H1 (cell line): ENCODE measurements at regions of chr1 and their contacts with region 1.

Region 1: GRCh38 chr1:181142096-181142958 is 53.8 kb downstream of the IER5 start:
- DNase-seq: peak; percentile 76 to 97
- H3K4me3 ChIP-seq: peak overlapping the region in 2 of 4 experiments; percentile 6 to 45; a peak in 2 of 8 replicates
- H3K27ac ChIP-seq: no peak overlapping the region
- H3K4me1 ChIP-seq: peaks cover 0 to 3% (median 2%) of the 10 kb centered on the region in 4 experiments; a peak in 3 of 7 replicates
- H3K27me3 ChIP-seq: peaks cover 0 to 2% (median under 1%) of the 10 kb centered on the region in 4 experiments; a peak in 1 of 7 replicates
- CTCF ChIP-seq: peak; percentile 97 to 98 (median 98)
- EP300 ChIP-seq: 0 out of 3 replicates have a peak, but pooled peaks of 1 of the 2 experiments have one; percentile 29
- POLR2A ChIP-seq: no peak
- RAD21 ChIP-seq: peak; percentile 100

Region 2: GRCh38 chr1:180533266-180533987 is 608.9 kb before region 1 on chr1:
- CTCF ChIA-PET with region 1: no interaction called
- POLR2A ChIA-PET with region 1: no interaction called
- DNase-seq: peak; percentile 15 to 84
- H3K4me3 ChIP-seq: no peak overlapping the region
- H3K27ac ChIP-seq: no peak overlapping the region
- H3K4me1 ChIP-seq: peaks cover 0 to 2% (median 0%) of the 10 kb centered on the region in 4 experiments; a peak in 2 of 7 replicates
- H3K27me3 ChIP-seq: no peaks in the 10 kb centered on the region
- CTCF ChIP-seq: peak; percentile 78 to 92 (median 87)
- EP300 ChIP-seq: no peak
- POLR2A ChIP-seq: no peak
- RAD21 ChIP-seq: peak; percentile 95 to 98

Region 3: DNA sequence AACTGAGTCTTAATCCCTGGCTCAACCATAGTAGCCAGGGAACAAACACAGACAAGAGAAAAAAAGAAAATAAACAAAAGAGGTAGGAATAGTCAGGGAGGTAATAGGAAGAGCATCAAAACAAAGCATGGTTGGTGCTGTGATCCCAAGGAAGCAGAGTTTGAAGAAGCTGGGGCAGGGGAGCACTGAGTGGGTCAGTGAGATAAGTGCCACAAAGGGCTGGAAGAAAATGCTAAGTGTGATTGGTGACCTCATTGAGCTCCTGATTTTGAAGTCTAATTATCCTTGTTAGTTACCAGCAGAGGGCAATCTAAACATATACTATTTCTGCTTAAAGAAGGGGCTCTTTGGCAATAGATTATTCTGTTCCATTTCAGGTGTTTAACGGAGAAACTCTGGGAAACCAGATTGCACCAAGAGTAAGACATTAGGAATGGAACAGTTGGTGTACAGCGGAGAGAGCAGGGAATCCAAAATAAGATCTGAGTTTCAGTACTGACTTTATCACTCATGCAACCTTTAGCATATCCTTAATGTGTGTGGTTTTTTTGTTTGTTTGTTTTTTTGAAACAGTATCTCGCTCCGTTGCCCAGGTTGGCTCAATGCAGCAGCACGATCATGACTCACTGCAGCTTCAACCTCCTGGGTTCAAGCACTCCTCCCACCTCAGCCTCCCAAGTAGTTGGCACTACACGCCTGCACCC is 260.4 kb before region 1 on chr1:
- CTCF ChIA-PET with region 1: interaction called, 14 read pairs
- POLR2A ChIA-PET with region 1: no interaction called
- DNase-seq: no peak
- H3K4me3 ChIP-seq: no peak overlapping the region
- H3K27ac ChIP-seq: no peak overlapping the region
- H3K4me1 ChIP-seq: no peaks in the 10 kb centered on the region
- H3K27me3 ChIP-seq: no peaks in the 10 kb centered on the region
- CTCF ChIP-seq: peak in 2 of 3 experiments; percentile 48 to 56; a peak in 2 of 4 replicates
- EP300 ChIP-seq: no peak
- POLR2A ChIP-seq: no peak
- RAD21 ChIP-seq: peak; percentile 71 to 79

Region 4: DNA sequence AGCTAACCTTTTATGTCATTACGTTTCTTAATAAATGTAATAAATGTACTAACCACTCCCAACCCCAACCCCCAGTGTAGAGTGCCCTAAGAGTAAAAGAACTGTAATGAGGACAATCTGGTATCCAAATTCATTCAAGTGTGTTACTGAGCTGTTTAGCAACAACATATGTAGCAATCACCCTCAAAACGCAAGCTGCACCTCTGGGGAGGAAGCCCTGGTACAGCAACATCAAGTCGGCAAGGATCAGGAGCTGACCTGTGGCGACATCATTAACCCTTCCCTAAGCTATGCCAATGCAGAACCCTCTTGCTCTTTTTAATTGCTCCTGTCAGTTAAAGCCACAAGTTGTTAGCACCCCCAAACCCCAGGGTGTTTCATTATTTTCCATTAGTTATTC is 166.8 kb before region 1 on chr1:
- CTCF ChIA-PET with region 1: interaction called, 11 read pairs
- POLR2A ChIA-PET with region 1: interaction called, 3 read pairs
- DNase-seq: peak in 1 of 2 experiments; percentile 8
- H3K4me3 ChIP-seq: no peak overlapping the region
- H3K27ac ChIP-seq: no peak overlapping the region
- H3K4me1 ChIP-seq: no peaks in the 10 kb centered on the region
- H3K27me3 ChIP-seq: no peaks in the 10 kb centered on the region
- CTCF ChIP-seq: no peak
- EP300 ChIP-seq: no peak
- POLR2A ChIP-seq: no peak
- RAD21 ChIP-seq: no peak

Region 5: GRCh38 chr1:181033799-181034451 is 108.4 kb before region 1 on chr1 and contains the start of gene MR1:
- CTCF ChIA-PET with region 1: interaction called, 142 read pairs
- POLR2A ChIA-PET with region 1: interaction called, 3 read pairs
- DNase-seq: no peak
- H3K4me3 ChIP-seq: no peak within 1 kb of the TSS
- H3K27ac ChIP-seq: no peak within 1 kb of the TSS
- H3K4me1 ChIP-seq: no peaks in the 10 kb centered on the region
- H3K27me3 ChIP-seq: no peaks in the 10 kb centered on the region
- CTCF ChIP-seq: no peak
- EP300 ChIP-seq: no peak
- POLR2A ChIP-seq: no peak
- RAD21 ChIP-seq: no peak
- total RNA-seq, gene MR1: 0.19 TPM in 1 of 2 replicates, not detected in the other

Region 6: DNA sequence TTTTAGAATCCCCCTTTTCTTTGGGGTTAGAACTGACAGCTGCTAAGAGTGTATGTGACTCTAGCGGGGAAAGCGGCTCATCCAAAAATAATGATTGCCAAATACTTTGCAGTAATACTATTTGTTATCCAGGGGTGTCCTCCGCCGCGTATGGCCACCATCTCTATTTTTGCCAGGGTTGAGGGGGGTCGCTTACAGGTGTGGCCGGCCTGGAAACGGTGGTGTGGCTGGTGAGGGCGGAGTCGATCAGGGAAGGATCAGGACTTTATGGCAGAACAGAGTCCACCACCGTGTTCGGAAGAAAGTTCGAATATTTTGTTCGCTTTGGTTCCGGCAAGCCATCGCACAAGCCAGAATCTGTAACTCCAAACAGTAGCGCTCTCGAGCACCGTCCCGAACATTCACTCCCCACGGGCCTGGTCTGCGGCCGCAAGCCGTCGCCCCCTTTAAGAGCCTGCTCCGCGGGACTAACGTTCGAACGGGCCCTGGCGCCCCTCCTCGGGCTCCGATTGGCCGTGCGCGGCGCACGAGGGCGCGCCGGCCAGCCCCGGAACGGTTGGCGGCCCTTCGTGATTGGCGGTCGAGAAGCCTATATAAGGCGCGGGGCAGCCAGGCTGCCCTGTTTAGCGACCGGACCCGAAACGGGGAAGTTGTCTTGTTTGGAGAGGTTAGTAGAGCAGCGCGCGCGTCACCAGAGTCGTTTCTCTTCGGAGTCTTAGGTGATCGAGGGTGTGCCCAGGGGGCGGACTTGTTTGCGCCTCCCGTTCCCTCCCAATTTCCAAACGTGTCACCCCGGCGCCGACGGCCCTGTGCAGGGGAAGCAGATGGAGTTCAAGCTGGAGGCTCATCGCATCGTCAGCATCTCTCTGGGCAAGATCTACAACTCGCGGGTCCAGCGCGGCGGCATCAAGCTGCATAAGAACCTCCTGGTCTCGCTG is 54.0 kb before region 1 on chr1 and contains the start of gene IER5:
- CTCF ChIA-PET with region 1: interaction called, 115 read pairs
- POLR2A ChIA-PET with region 1: interaction called, 71 read pairs
- DNase-seq: peak; percentile 76 to 97
- H3K4me3 ChIP-seq: peak within 1 kb of the TSS; percentile 58 to 72 (median 64)
- H3K27ac ChIP-seq: no peak within 1 kb of the TSS
- H3K4me1 ChIP-seq: peaks cover 0 to 4% (median under 1%) of the 10 kb centered on the region in 4 experiments; a peak in 2 of 7 replicates
- H3K27me3 ChIP-seq: peaks cover 0 to 31% (median 18%) of the 10 kb centered on the region in 4 experiments; a peak in 6 of 7 replicates
- CTCF ChIP-seq: no peak
- EP300 ChIP-seq: no peak
- POLR2A ChIP-seq: peak; percentile 99
- RAD21 ChIP-seq: peak in 1 of 2 experiments; percentile 2; a peak in 1 of 4 replicates
- total RNA-seq, gene IER5: 7.1 and 7.7 TPM in 2 replicates

Region 7: DNA sequence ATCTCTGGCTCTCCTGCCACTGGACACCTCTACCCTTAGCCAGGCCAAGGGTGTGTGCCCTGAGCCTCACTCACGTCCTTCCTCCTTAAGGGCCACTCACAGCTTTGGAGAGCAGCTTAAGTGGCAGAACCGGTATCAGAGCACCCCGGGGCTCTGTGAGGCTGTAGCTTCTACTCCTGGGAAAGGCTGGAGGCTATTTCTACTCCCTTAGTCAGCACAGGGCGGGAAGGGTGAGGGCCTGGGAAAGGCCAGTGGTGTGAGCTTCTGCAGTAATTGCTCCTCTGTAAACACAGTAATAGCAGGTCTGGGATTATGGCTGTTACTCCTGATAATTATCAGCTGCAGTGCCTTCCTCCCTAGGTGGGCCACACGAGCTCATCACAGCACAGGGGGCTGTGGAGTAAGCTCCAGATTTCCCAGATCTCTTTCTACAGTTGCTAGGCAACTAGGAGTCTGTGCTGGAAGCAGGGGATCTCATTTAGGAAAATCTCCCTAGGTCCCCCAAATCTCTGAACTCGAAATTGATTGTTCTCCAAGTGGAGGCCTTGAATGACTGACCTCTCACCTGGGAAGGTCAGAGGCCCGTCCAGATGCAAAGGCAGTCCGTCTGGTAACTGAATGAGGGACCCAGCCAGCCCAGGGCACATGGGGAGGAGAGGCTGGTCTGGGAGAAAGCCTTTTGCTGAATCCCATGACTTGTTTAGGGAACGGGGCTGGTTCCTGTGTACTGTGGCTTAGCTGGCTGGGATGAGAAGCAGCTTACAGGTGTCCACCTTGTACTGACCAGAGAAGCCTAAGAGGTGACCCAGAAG is 24.5 kb before region 1 on chr1:
- CTCF ChIA-PET with region 1: interaction called, 20 read pairs
- POLR2A ChIA-PET with region 1: no interaction called
- DNase-seq: no peak
- H3K4me3 ChIP-seq: no peak overlapping the region
- H3K27ac ChIP-seq: no peak overlapping the region
- H3K4me1 ChIP-seq: peaks cover 2 to 9% (median 7%) of the 10 kb centered on the region in 4 experiments; a peak in 5 of 7 replicates
- H3K27me3 ChIP-seq: no peaks in the 10 kb centered on the region; a peak in 1 of 7 replicates
- CTCF ChIP-seq: no peak
- EP300 ChIP-seq: no peak
- POLR2A ChIP-seq: no peak
- RAD21 ChIP-seq: no peak

Region 8: GRCh38 chr1:181152892-181153633 is 10.7 kb after region 1 on chr1:
- CTCF ChIA-PET with region 1: interaction called, 22 read pairs
- POLR2A ChIA-PET with region 1: no interaction called
- DNase-seq: no peak
- H3K4me3 ChIP-seq: no peak overlapping the region
- H3K27ac ChIP-seq: no peak overlapping the region
- H3K4me1 ChIP-seq: peaks cover 0 to 4% (median 0%) of the 10 kb centered on the region in 4 experiments; a peak in 2 of 7 replicates
- H3K27me3 ChIP-seq: no peaks in the 10 kb centered on the region
- CTCF ChIP-seq: peak; percentile 15 to 32 (median 27); a peak in 3 of 4 replicates
- EP300 ChIP-seq: no peak
- POLR2A ChIP-seq: no peak
- RAD21 ChIP-seq: peak; percentile 21 to 43

Region 9: DNA sequence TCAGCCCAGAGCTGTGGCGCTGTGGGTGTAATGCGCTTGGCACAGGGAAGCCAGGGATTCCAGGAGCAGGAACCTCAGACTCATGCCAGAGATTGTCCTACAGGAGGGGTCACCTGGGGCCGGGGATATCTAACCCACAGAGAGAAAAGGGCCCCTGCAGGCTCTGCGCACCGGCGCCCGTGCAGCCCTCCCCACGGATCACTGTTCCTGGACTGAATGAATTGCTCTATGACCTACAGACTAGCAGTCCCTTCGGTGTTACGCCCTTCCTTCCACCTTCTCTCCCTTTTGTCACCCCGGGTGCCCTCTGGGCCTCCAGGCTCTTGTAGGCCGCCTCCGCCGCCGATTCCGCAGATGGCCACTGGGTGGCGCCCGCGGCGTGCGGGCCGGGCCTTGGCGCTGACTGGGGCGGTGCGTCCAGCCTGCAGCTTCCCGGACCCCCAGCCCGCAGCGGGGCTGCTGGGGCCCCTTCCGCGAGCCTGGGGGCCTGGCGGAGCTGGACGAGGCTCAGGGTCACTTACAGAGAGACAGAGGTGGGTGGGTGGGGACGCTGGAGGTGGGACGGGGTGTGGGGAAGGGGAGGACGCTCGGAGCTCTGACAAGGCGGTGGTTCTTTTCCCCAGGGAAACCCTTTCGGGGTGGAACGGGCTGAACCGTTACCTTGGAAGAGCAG is 47.5 kb after region 1 on chr1:
- CTCF ChIA-PET with region 1: no interaction called
- POLR2A ChIA-PET with region 1: no interaction called
- DNase-seq: peak; percentile 58 to 98
- H3K4me3 ChIP-seq: peak overlapping the region in 3 of 4 experiments; percentile 16 to 63 (median 26); a peak in 4 of 8 replicates
- H3K27ac ChIP-seq: no peak overlapping the region
- H3K4me1 ChIP-seq: peaks cover 0 to 2% (median 0%) of the 10 kb centered on the region in 4 experiments; a peak in 1 of 7 replicates
- H3K27me3 ChIP-seq: peaks cover 0 to 8% (median 4%) of the 10 kb centered on the region in 4 experiments; a peak in 2 of 7 replicates
- CTCF ChIP-seq: peak; percentile 91 to 99 (median 95)
- EP300 ChIP-seq: 0 out of 3 replicates have a peak, but pooled peaks of 1 of the 2 experiments have one; percentile 48
- POLR2A ChIP-seq: no peak
- RAD21 ChIP-seq: peak; percentile 97 to 100